ENCODE measurements at regions of chr2 and their contacts with region 1.

Region 1: GRCh38 chr2:166127217-166128155 is at the start of gene SCN1A:
- DNase-seq: no peak
- ATAC-seq: no peak
- total RNA-seq, gene SCN1A: 0.59 TPM

Region 2: DNA sequence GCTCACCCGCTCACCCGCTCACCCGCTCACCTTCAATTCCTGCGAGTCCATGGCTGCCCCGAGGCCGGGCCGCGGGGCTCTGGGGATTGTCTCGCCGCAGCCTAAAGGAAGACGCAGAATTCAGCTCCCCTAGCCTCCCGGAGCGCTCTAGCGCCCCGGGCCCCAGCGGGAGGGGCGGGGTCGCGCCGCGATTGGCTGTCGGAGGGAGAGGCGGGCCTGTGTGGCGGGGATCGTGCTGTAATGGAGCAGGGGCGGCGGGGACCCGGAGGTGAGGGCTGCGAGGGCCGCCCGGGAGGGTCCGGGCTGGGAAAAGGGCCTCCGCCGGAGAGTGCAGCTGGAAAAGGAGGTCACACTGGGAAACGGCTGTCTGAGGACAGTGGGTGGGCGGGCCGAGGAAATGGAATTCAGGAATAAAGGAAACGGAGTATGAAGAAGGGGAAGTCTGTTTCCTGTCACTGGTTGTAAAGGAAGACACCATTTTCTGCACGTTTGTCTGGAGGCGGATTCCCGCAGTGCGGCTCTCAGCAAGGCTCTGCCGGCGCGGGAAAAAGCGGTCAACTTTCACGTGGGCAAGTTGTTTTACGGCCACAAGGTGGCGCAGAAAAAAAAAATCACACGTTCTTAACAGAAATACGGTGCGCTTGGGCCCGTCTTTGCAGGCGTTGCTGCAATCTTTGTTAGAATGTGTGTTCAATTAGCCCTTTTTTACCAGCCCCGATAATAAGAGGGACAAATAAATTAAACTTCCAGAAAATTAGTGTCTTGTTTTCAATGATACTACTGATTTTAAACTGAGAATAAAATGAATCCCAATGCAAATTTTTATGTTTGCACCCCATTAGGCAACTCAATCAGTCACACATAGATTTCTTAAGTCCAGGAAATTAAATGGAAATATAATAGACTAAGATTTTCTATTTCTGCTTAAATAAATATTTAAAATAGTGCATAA is 173.6 kb before region 1 on chr2 and contains the start of gene TTC21B:
- intact Hi-C with region 1: loop called (anchors 10 kb)
- DNase-seq: peak; percentile 96
- ATAC-seq: peak; percentile 100
- total RNA-seq, gene TTC21B: 11.7 TPM

Region 3: DNA sequence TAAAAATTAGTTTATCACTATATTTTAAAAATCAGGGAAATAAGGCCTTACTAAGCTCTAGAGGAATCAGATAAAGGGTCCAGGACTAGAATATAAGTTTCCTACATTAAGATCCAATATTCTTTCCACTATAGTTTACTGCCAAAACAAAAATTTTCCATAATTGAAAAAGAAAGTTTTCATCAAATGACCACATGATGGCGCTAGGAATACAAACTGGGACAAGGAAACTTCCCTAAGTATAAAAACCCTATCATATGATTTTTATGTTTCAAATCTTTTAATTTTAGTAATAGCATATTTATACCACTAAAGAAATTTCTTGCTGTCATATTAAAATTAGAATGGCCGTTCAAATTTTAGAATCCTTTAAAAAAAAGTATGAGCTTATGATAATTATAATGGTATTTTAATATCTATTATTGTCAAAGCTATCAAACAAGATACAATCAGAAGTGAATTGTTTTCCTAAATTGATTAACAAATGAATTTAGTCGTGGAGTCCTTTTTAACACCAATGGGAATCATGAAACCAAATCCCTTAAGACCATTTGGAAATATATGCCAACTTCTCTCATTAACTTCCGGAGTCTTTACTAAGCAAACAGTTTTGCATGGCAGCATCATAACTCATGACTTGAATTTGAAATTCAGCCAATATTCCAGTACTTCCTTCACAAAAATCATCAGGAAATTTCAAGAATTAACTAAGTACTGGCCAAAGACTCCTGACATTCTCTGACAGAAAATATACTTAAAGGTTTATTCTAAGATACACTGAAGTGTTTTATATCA is 69.9 kb before region 1 on chr2:
- intact Hi-C with region 1: loop called (anchors 10 kb)
- DNase-seq: no peak
- ATAC-seq: no peak